ENCODE measurements at regions of chr1 and their contacts with region 1.

Region 1: DNA sequence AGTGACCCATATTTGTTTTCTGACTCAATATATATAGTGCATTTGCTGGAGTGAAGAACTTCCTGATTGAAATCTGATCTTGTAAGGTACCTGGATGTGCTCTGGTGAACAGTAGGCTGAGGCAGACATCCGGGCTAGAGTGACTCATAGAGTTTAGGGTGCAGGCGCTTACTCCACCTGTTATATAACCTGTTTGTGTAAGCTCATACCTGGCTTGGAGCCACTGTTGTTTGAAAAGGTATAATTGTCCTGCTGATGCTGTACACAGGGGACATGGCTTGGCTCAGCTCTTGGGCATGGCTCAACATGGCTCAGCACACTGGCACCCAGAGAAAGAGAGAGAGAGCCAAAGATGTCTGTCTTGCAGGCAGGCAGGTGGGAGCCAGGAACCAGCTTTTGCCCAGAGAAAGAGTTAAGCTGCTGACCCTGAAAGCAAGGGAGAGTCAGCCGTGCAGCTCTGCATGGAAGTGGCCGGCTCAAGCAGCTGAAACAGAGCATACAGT is 43.3 kb downstream of the GJA5 start:
- DNase-seq: peak; percentile 78
- ATAC-seq: peak; percentile 92
- H3K4me3 ChIP-seq: no peak overlapping the region
- H3K27ac ChIP-seq: peak overlapping the region; percentile 44
- H3K4me1 ChIP-seq: peaks cover 12 to 18% of the 10 kb centered on the region in 2 experiments
- H3K27me3 ChIP-seq: no peaks in the 10 kb centered on the region
- CTCF ChIP-seq: no peak
- POLR2A ChIP-seq: no peak
- RAD21 ChIP-seq: no peak

Region 2: GRCh38 chr1:147670317-147671041 is 46.6 kb before region 1 on chr1 and contains the start of gene ACP6:
- CTCF ChIA-PET with region 1: no interaction called
- POLR2A ChIA-PET with region 1: no interaction called
- RAD21 ChIA-PET with region 1: no interaction called
- intact Hi-C with region 1: loop called (anchors 5 kb)
- DNase-seq: peak; percentile 93
- ATAC-seq: peak; percentile 94
- H3K4me3 ChIP-seq: peak within 1 kb of the TSS; percentile 66 to 80
- H3K27ac ChIP-seq: peak within 1 kb of the TSS; percentile 84
- H3K4me1 ChIP-seq: peaks cover 3 to 11% of the 10 kb centered on the region in 2 experiments; a peak in 2 of 4 replicates
- H3K27me3 ChIP-seq: no peaks in the 10 kb centered on the region
- CTCF ChIP-seq: no peak
- POLR2A ChIP-seq: peak; percentile 81
- RAD21 ChIP-seq: no peak
- total RNA-seq, gene ACP6: 26.4 TPM

Measured in HCT116 (cell line).